ENCODE measurements at regions of chr17 and their contacts with region 1.

Region 1: GRCh38 chr17:1055751-1056645 is 59.1 kb downstream of the TIMM22 start:
- DNase-seq: no peak
- H3K4me3 ChIP-seq: no peak overlapping the region
- CTCF ChIP-seq: peak; percentile 76

Region 2: DNA sequence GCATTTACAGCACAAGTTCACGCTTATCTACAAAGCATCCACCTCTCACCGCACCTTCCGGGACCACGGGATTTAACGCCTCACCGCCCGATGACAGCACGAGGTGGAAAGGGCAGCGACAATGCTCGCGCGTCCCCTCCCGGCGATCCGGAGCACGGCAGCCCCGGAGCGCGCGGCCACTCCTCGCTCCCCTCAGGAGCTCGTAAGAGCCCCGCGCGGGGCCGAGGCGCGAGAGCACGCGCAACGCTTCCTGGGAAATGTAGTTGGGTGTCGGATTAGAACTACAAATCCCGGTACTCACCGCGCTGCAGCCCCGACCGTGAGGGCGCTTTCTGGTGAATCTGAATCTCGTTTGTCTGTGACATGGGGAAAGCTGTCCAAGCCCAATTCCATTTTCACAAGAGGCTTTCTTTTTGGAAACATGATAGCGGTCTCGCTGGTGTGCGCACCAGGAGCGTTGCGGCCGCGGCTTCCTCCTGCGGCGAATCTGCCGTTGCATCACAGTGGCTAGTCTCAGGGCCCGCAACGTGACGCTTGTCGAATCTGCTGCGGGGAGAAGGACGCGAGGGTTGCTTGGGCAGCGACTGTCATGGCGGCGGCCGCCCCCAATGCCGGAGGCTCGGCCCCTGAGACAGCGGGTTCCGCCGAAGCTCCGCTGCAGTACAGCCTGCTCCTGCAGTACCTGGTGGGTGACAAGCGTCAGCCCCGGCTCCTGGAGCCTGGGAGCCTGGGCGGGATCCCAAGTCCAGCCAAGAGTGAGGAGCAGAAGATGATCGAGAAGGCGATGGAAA is 59.2 kb before region 1 on chr17 and contains the start of gene TIMM22:
- CTCF ChIA-PET with region 1: interaction called, 146 read pairs
- POLR2A ChIA-PET with region 1: interaction called, 3 read pairs
- DNase-seq: peak; percentile 88
- H3K4me3 ChIP-seq: peak within 1 kb of the TSS; percentile 100
- CTCF ChIP-seq: peak; percentile 92

Region 3: GRCh38 chr17:1019451-1019850 is 36.5 kb before region 1 on chr17:
- CTCF ChIA-PET with region 1: interaction called, 10 read pairs
- POLR2A ChIA-PET with region 1: no interaction called
- DNase-seq: no peak
- H3K4me3 ChIP-seq: no peak overlapping the region
- CTCF ChIP-seq: no peak

Region 4: GRCh38 chr17:1029196-1029921 is 26.6 kb before region 1 on chr17:
- CTCF ChIA-PET with region 1: interaction called, 25 read pairs
- POLR2A ChIA-PET with region 1: no interaction called
- DNase-seq: no peak
- H3K4me3 ChIP-seq: no peak overlapping the region
- CTCF ChIP-seq: no peak

Region 5: GRCh38 chr17:1039511-1040215 is 16.3 kb before region 1 on chr17:
- CTCF ChIA-PET with region 1: interaction called, 65 read pairs
- POLR2A ChIA-PET with region 1: no interaction called
- DNase-seq: no peak
- H3K4me3 ChIP-seq: no peak overlapping the region
- CTCF ChIP-seq: no peak

Region 6: DNA sequence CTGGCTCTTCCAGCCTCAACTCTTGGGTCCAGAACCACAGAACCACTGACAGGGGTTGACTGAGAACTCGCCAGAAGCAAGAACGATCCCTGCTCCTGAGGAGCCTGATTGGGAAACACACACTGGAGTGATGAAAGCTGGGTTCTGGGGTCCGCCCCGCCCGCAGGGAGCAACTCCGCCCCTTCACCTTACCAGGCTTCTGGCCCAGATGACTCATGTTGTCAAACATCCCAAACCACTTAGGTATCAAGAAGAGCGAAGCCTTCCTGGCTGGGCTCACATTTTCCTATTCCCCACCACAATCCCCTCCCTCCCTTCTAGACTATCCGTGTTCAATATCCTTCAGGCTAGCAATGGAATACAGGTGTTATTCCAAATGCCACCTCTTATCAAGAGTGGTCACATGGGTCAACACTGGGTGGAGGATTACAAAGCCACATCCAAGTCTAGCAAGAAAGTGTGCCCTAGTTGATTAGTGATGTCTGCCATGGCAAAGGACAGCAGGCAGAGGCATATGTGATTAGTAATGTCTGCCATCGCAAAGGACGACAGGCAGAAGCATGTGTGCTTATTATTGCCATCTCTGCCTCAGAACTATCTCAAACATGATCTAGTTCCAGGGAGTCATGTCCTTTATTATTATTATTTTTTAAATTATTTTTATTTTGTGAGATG is 11.4 kb after region 1 on chr17:
- CTCF ChIA-PET with region 1: interaction called, 18 read pairs
- POLR2A ChIA-PET with region 1: no interaction called
- DNase-seq: no peak
- H3K4me3 ChIP-seq: no peak overlapping the region
- CTCF ChIP-seq: no peak

Region 7: GRCh38 chr17:1074886-1075605 is 19.0 kb after region 1 on chr17:
- CTCF ChIA-PET with region 1: interaction called, 14 read pairs
- POLR2A ChIA-PET with region 1: no interaction called
- DNase-seq: no peak
- H3K4me3 ChIP-seq: no peak overlapping the region
- CTCF ChIP-seq: no peak